Naive thymus-derived CD4-positive, alpha-beta T cell (primary cell): ENCODE measurements at regions of chr14 and their contacts with region 1.

Region 1: DNA sequence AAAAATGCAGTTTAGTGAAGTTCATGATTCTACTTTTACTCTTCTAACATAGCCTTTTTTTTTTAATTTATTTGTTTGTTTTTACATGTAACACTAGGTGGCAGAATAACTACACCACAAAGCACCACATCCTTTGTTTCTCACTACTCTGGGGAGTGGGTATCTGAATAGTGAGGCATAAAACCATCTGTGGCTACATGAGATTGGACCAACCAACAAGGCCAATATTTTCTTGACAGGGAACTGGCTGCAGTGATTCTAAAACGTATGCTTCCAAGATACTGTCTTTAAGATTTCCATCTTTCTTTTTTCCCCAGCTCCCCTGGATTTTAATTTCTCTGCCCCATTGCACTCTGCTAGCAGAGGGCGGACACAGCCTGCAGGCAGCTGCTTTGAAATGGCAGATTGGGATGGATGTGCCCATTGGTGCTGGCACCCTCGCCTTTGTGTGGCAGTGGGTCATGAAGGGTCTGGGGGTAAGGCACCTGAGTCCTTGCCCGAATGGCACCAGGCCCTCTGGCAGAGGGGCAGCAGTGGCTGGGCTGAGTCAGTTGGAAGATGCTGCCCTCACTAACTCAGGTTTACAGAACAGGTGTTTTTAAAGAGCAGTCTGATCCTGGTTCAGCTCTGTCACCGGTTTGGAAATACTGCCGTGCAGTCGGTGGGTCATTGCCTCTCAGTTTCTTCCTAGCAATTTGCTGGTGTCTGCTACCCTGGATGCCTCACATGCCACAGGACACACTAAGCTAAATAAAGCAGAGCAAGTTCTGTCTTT is 429.1 kb downstream of the RAD51B start:
- DNase-seq: peak in 7 of 9 donors; percentile 34 to 75 (median 64)
- ATAC-seq: peak; percentile 89
- H3K4me3 ChIP-seq: no peak overlapping the region
- H3K4me3 Mint-ChIP-seq: no peak overlapping the region
- H3K27ac ChIP-seq: no peak overlapping the region
- H3K27ac Mint-ChIP-seq: peak overlapping the region in 7 of 9 donors; percentile 41 to 81 (median 64)
- H3K4me1 ChIP-seq: peaks cover 0 to 13% of the 10 kb centered on the region in 2 donors
- H3K4me1 Mint-ChIP-seq: peaks cover 14 to 52% (median 47%) of the 10 kb centered on the region in 7 donors
- H3K27me3 ChIP-seq: no peaks in the 10 kb centered on the region
- H3K27me3 Mint-ChIP-seq: no peaks in the 10 kb centered on the region

Region 2: DNA sequence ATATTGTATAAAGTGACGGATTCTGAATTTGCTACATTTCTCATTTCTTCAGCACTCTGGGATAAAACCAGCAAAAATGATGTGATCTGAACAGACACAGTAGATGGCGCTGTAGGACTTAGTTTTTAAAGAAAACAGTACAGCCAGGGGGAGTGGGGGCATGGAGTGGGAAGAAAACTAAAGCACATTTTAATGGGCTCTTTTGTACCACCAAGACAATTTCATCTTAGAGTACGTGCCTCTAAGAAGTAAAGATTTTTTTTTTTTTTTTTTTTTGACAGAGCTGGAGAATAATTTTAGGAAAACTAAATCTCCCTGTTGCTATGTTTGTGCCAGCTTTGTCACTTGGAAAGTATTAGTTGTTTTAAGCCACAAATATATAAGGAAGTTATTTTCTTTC is 304.7 kb before region 1 on chr14:
- CTCF ChIA-PET with region 1: interaction called, 3 read pairs
- POLR2A ChIA-PET with region 1: no interaction called
- intact Hi-C with region 1: loop called in 1 of 2 experiments (anchors 5 kb)
- DNase-seq: peak in 7 of 9 donors; percentile 22 to 57 (median 49)
- ATAC-seq: peak; percentile 80
- H3K4me3 ChIP-seq: no peak overlapping the region
- H3K4me3 Mint-ChIP-seq: no peak overlapping the region
- H3K27ac ChIP-seq: no peak overlapping the region
- H3K27ac Mint-ChIP-seq: no peak overlapping the region
- H3K4me1 ChIP-seq: no peaks in the 10 kb centered on the region
- H3K4me1 Mint-ChIP-seq: peaks cover 0 to 2% (median 0%) of the 10 kb centered on the region in 7 donors
- H3K27me3 ChIP-seq: no peaks in the 10 kb centered on the region
- H3K27me3 Mint-ChIP-seq: no peaks in the 10 kb centered on the region

Region 3: GRCh38 chr14:68060198-68060597 is 188.5 kb before region 1 on chr14:
- CTCF ChIA-PET with region 1: no interaction called
- POLR2A ChIA-PET with region 1: no interaction called
- intact Hi-C with region 1: no loop called
- DNase-seq: no peak
- ATAC-seq: no peak
- H3K4me3 ChIP-seq: no peak overlapping the region
- H3K4me3 Mint-ChIP-seq: no peak overlapping the region
- H3K27ac ChIP-seq: no peak overlapping the region
- H3K27ac Mint-ChIP-seq: no peak overlapping the region
- H3K4me1 ChIP-seq: no peaks in the 10 kb centered on the region
- H3K4me1 Mint-ChIP-seq: peaks cover 0 to 7% (median 0%) of the 10 kb centered on the region in 7 donors
- H3K27me3 ChIP-seq: no peaks in the 10 kb centered on the region
- H3K27me3 Mint-ChIP-seq: no peaks in the 10 kb centered on the region

Region 4: DNA sequence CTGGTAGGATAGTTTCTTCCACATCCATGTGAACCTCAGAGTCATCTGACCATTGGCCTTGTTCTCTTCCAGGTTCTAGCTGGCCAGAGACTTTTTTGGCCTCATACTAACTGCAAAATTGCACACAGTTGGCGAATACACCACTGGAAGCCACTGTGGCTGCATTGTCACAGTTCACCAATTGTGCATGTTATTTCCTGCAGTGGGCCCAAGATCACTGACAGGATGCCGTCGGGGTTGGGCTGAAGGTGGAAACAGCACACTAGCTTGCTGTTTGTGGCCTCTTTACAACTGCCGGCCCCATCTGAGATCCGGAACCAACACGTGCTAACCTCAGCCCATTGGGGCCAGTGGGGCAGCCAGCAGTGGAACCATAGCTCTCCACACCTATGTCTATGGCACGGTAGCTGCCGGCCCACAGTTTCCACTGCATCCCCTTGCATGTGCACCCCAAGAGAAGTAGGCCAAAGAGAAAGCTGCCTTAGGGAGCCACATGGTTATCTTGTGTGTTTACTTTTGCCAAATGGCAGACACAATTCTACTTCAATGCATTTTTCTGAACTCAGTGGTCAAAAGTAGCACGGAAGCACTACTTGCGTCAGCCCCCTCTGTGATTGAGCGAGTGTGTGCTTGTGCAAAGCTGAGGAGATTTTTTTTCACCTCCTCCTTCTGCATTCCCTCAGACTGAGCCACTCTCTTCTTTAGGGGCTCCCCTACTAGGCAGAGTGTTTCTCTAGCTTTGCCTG is 34.9 kb after region 1 on chr14:
- CTCF ChIA-PET with region 1: interaction called, 17 read pairs
- POLR2A ChIA-PET with region 1: interaction called, 12 read pairs
- intact Hi-C with region 1: loop called in 1 of 2 experiments (anchors 5 kb)
- DNase-seq: peak; percentile 20 to 70 (median 62)
- ATAC-seq: peak; percentile 78
- H3K4me3 ChIP-seq: peak overlapping the region; percentile 14
- H3K4me3 Mint-ChIP-seq: peak overlapping the region; percentile 44 to 86 (median 72)
- H3K27ac ChIP-seq: peak overlapping the region; percentile 74
- H3K27ac Mint-ChIP-seq: peak overlapping the region; percentile 93 to 99 (median 97)
- H3K4me1 ChIP-seq: peaks cover 36 to 70% of the 10 kb centered on the region in 2 donors
- H3K4me1 Mint-ChIP-seq: peaks cover 44 to 96% (median 86%) of the 10 kb centered on the region in 7 donors
- H3K27me3 ChIP-seq: no peaks in the 10 kb centered on the region
- H3K27me3 Mint-ChIP-seq: no peaks in the 10 kb centered on the region

Region 5: DNA sequence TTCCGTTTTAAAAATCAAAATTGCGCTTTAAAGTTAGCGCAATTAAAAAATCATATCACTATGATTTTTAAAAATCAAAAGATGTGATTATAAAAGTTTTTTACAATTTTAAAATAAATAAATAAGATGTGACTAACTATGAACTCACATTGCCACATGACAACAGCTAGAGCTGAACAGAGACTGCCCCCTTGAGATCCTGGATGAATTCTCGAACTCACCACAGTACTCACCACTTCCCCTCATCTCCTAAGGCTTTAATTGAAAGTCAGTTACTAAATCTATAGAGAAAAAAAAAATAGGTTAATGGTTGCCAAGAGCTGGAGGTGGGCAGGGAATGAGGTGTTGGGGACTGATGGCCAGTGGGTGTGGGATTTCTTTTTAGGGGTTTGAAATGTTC is 160.0 kb after region 1 on chr14:
- CTCF ChIA-PET with region 1: interaction called, 14 read pairs
- POLR2A ChIA-PET with region 1: interaction called, 9 read pairs
- intact Hi-C with region 1: loop called (anchors 1 to 2 kb)
- DNase-seq: peak in 4 of 9 donors; percentile 9 to 27 (median 10)
- ATAC-seq: peak; percentile 58
- H3K4me3 ChIP-seq: no peak overlapping the region
- H3K4me3 Mint-ChIP-seq: no peak overlapping the region
- H3K27ac ChIP-seq: no peak overlapping the region
- H3K27ac Mint-ChIP-seq: peak overlapping the region in 2 of 9 donors; percentile 43 to 60
- H3K4me1 ChIP-seq: peaks cover 5 to 19% of the 10 kb centered on the region in 2 donors
- H3K4me1 Mint-ChIP-seq: peaks cover 24 to 43% (median 39%) of the 10 kb centered on the region in 7 donors
- H3K27me3 ChIP-seq: no peaks in the 10 kb centered on the region
- H3K27me3 Mint-ChIP-seq: no peaks in the 10 kb centered on the region

Region 6: GRCh38 chr14:68775143-68776126 is 526.8 kb after region 1 on chr14:
- CTCF ChIA-PET with region 1: interaction called, 219 read pairs
- POLR2A ChIA-PET with region 1: interaction called, 20 read pairs
- intact Hi-C with region 1: no loop called
- DNase-seq: no peak
- ATAC-seq: no peak
- H3K4me3 ChIP-seq: no peak overlapping the region
- H3K4me3 Mint-ChIP-seq: peak overlapping the region in 2 of 10 donors; percentile 25 to 33
- H3K27ac ChIP-seq: no peak overlapping the region
- H3K27ac Mint-ChIP-seq: peak overlapping the region in 4 of 9 donors; percentile 39 to 68 (median 47)
- H3K4me1 ChIP-seq: peaks cover 26 to 49% of the 10 kb centered on the region in 2 donors
- H3K4me1 Mint-ChIP-seq: peaks cover 47 to 91% (median 80%) of the 10 kb centered on the region in 7 donors
- H3K27me3 ChIP-seq: no peaks in the 10 kb centered on the region
- H3K27me3 Mint-ChIP-seq: no peaks in the 10 kb centered on the region

Region 7: GRCh38 chr14:68824517-68825347 is 576.1 kb after region 1 on chr14:
- CTCF ChIA-PET with region 1: interaction called, 219 read pairs
- POLR2A ChIA-PET with region 1: interaction called, 233 read pairs
- intact Hi-C with region 1: no loop called
- DNase-seq: peak in 1 of 9 donors; percentile 61
- ATAC-seq: peak; percentile 70
- H3K4me3 ChIP-seq: no peak overlapping the region
- H3K4me3 Mint-ChIP-seq: peak overlapping the region in 1 of 10 donors; percentile 16
- H3K27ac ChIP-seq: no peak overlapping the region
- H3K27ac Mint-ChIP-seq: peak overlapping the region in 2 of 9 donors; percentile 22 to 68
- H3K4me1 ChIP-seq: peaks cover 15 to 27% of the 10 kb centered on the region in 2 donors
- H3K4me1 Mint-ChIP-seq: peaks cover 6 to 38% (median 29%) of the 10 kb centered on the region in 7 donors
- H3K27me3 ChIP-seq: no peaks in the 10 kb centered on the region
- H3K27me3 Mint-ChIP-seq: peaks cover 0 to 10% (median 0%) of the 10 kb centered on the region in 5 donors